Dendritic cell treated with granulocyte-macrophage colony-stimulating factor and Interleukin-4, amounts not matched to agents 40 ng/mL and 50 ng/mL, for 4 days (primary cell): ENCODE measurements at regions of chr7 and their contacts with region 1.

Region 1: DNA sequence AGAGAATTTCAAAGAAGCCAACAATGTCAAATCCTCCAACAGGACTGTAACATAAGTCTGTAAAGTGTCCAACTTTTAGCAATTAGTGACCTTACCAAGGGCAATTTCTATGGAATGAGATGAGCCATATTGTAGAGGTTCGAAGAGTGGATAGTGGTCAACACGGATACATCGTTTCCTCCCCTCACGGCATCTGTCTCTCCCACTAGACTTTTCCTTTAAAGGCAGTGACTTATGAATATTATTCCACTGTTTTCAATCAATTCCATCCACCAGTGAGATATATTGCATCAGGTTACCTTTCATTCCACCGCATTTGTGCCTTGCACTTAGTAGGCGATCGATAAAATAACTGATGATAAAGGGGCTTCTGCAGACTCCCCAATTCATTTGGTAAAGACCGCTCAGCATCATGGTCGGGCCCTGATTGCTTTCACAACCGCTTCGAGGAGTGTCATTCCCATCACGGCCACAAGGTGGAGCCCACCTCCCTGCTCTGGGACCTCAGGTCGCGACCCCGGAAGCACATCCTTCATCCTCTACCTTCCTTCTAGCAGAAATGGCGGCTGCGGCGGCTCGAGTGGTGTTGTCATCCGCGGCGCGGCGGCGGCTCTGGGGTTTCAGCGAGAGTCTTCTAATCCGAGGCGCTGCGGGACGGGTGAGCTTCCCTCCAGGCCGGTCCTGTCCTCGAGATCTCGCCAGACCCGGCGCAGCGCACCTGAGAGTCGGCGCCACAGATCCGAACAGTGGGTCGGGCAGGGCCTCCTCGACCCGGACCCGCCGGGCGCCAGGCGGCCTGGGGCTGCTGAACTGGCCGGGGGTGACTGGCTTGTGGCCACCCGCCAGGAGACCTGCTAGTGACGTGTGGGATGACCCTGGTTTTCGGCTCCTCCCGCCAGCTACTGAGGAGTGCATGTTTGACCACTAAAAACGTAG is at the start of gene PMPCB:
- H3K4me3 Mint-ChIP-seq: peak within 1 kb of the TSS; percentile 85
- H3K27ac Mint-ChIP-seq: peak within 1 kb of the TSS; percentile 88
- H3K4me1 Mint-ChIP-seq: peaks cover 21% of the 10 kb centered on the region
- H3K27me3 Mint-ChIP-seq: no peaks in the 10 kb centered on the region

Region 2: GRCh38 chr7:102830197-102830596 is 467.0 kb before region 1 on chr7:
- intact Hi-C with region 1: no loop called
- H3K4me3 Mint-ChIP-seq: no peak overlapping the region
- H3K27ac Mint-ChIP-seq: no peak overlapping the region
- H3K4me1 Mint-ChIP-seq: peaks cover 4% of the 10 kb centered on the region
- H3K27me3 Mint-ChIP-seq: no peaks in the 10 kb centered on the region

Region 3: DNA sequence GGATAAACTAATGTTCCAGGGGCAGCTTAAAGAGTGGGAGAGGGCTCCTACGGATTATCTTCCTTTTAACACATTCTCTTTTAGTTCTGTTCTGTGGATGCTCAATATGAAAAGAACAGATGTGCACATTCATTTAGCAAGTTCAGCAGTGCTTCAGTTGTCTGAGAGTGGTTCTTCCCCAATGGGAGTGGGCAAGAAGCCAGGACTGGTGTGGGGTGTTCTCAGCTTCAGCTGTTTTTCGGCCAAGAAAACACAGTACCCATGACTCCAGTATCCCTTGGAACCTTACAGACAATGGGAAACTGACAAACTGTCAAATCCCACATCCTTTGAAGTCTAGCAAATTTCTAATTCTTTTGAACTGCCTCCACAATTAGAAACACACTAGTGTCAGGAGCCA is 455.9 kb before region 1 on chr7:
- intact Hi-C with region 1: no loop called
- H3K4me3 Mint-ChIP-seq: no peak overlapping the region
- H3K27ac Mint-ChIP-seq: no peak overlapping the region
- H3K4me1 Mint-ChIP-seq: no peaks in the 10 kb centered on the region
- H3K27me3 Mint-ChIP-seq: no peaks in the 10 kb centered on the region

Region 4: GRCh38 chr7:103240806-103241205 is 56.4 kb before region 1 on chr7:
- intact Hi-C with region 1: no loop called
- H3K4me3 Mint-ChIP-seq: no peak overlapping the region
- H3K27ac Mint-ChIP-seq: no peak overlapping the region
- H3K4me1 Mint-ChIP-seq: no peaks in the 10 kb centered on the region
- H3K27me3 Mint-ChIP-seq: no peaks in the 10 kb centered on the region

Region 5: GRCh38 chr7:103347507-103348267 is 50.5 kb after region 1 on chr7 and contains the start of gene PSMC2:
- intact Hi-C with region 1: loop called (anchors 2 kb)
- H3K4me3 Mint-ChIP-seq: peak within 1 kb of the TSS; percentile 98
- H3K27ac Mint-ChIP-seq: peak within 1 kb of the TSS; percentile 94
- H3K4me1 Mint-ChIP-seq: peaks cover 32% of the 10 kb centered on the region
- H3K27me3 Mint-ChIP-seq: no peaks in the 10 kb centered on the region

Region 6: DNA sequence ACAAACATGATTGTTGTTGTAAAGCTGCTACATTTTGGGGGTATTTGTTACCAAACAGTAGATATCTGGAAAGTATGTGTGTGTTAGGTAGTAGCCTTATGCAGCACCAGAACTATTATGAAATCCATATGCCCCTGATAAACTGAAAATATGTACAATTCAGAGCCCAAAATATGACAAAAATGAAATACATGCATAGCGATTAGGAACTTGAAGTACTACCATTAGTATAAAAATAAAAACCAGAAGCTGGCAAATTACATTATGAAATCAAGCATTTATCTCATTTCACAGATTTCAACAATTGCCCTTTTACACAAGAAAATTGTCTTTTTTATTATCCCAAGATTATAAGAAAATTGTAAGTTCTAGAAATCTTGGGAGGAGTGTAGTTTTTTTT is 115.0 kb after region 1 on chr7:
- intact Hi-C with region 1: loop called (anchors 1 kb)
- H3K4me3 Mint-ChIP-seq: no peak overlapping the region
- H3K27ac Mint-ChIP-seq: no peak overlapping the region
- H3K4me1 Mint-ChIP-seq: no peaks in the 10 kb centered on the region
- H3K27me3 Mint-ChIP-seq: no peaks in the 10 kb centered on the region

Region 7: DNA sequence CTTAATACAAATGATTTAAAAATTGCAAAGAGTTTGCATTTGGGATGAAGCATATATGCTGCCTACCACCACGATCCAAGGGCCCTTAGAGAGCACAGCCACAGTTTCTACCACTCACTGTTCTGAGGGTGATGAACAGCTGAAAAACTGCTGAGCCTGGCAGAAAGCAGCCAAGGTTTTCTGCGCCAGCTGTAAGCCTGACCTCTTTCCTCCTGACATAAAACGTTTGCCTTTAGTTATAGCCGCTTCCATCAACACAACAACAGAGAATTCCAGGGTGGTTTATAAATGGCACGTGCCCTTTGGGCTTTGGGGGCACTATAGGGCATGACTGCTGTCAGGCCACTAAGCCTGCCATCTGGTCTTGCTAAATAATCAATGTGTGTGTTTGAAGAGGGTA is 469.5 kb after region 1 on chr7:
- intact Hi-C with region 1: no loop called
- H3K4me3 Mint-ChIP-seq: no peak overlapping the region
- H3K27ac Mint-ChIP-seq: no peak overlapping the region
- H3K4me1 Mint-ChIP-seq: no peaks in the 10 kb centered on the region
- H3K27me3 Mint-ChIP-seq: no peaks in the 10 kb centered on the region